Pancreas (tissue), 10 donors: ENCODE measurements at regions of chr7 and their contacts with region 1.

Region 1: DNA sequence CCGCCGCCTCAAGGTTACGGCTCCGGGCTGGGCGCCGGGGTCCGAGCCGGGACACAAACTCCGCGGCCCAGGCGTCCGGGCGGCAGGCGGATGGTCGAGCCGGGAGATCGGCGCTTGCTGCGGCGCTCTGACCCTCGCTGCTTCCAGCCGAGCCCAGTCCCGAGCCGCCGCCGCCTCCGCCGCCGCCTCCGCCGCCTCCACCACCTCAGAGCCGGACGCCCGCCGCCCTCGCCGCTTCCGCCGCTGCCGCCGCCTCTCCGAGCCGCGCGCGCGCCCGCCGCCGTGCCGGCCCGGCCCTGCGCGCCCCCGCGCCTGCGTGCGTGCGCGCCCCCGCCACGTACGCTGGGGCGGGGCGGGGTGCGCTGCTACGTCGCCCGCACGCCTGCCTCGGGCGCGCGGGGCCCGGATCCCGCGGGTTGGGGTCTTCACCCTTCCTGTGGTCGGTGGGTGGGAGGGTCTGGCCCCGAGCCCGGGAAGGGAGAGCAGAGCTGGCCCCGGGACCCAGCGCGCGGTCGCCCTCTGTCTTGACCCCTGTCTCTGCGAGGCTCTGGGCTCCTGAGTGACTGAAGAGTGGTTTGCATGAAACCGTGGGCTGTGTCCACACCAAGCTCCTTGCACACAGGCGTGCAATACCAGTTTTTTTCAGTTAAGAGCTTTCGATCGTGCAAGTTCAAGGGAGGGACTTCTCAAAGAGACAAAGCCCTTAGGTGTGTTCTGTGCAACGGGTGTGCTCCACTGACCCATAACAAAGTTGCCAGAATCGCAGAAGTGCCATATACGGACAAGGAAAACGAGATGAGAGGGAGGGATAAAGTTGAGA is at the start of gene SMURF1:
- DNase-seq: peak; percentile 53 to 89 (median 79)
- ATAC-seq: peak; percentile 68 to 81 (median 70)
- H3K4me3 ChIP-seq: peak within 1 kb of the TSS; percentile 84 to 98 (median 92)
- H3K27ac ChIP-seq: peak within 1 kb of the TSS; percentile 93 to 97 (median 94)
- H3K4me1 ChIP-seq: peaks cover 0 to 25% (median 17%) of the 10 kb centered on the region in 3 donors
- H3K27me3 ChIP-seq: no peaks in the 10 kb centered on the region
- CTCF ChIP-seq: no peak
- total RNA-seq, gene SMURF1: 9.0 to 22.7 (median 15.7) TPM

Region 2: DNA sequence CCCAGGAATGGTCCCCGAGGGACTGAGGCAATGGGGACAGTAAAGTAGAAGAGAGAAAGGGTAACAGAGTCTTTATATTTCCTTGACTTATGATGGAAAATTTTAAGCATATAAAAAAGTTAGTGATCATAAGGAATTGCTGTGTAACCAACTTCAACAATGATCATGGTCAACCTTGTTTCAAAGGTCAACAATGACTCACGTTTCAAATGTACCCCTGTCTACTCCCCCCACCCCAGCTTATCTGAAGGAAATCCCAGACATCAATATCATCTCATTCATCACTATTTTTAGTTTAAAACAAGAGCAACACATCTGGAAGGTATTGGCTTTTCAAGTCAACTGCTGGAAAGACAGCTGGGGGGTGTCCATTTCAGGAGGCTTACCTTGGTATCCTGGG is 93.1 kb before region 1 on chr7:
- intact Hi-C with region 1: loop called in 1 of 3 experiments (anchors 10 kb)
- DNase-seq: no peak
- ATAC-seq: peak; percentile 32 to 73 (median 50)
- H3K4me3 ChIP-seq: no peak overlapping the region
- H3K27ac ChIP-seq: no peak overlapping the region
- H3K4me1 ChIP-seq: peaks cover 0 to 6% (median 0%) of the 10 kb centered on the region in 3 donors
- H3K27me3 ChIP-seq: no peaks in the 10 kb centered on the region
- CTCF ChIP-seq: no peak

Region 3: DNA sequence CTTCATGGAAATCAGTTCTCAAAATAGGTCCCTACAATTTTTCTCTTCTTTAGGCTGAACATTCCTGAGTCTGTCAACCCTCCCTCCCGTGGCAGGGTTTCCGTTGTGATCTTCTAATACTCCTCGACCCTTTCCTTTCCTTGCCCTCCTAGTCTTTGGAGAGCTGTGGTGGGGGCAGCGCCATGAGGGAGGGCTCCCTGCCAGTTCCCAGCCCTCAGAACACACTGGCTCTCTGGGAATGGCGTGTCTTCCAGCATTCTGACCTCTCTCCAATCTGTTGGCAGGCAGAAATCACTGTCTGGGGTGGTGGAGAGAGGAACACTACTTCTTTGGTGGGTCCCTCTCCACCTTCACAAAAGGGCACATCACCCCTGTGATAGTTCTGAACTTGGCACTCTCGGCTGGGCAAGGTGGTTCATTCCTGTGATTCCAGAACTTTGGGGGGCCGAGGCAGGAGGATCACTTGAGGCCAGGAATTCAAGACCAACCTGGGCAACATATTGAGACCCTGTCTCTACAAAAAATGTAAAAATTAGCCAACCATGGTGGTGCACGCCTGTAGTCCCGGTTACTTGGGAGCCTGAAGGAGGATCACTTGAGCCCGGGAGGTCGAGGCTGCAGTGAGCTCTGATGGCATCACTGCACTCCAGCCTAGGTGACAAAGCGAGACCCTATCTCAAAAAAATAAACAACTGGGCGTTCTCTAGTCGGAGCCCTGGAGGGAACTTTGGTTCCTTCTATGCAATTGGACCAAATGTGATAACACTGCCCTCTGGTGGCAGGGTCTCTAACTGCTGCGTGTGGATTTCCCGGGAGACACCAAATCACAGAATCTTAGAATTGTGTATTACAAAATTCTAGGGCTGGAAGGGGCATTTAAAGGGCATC is 168.5 kb after region 1 on chr7:
- intact Hi-C with region 1: loop called in 1 of 3 experiments (anchors 10 kb)
- DNase-seq: peak in 5 of 6 donors; percentile 43 to 87 (median 68)
- ATAC-seq: peak; percentile 84 to 98 (median 90)
- H3K4me3 ChIP-seq: no peak overlapping the region
- H3K27ac ChIP-seq: no peak overlapping the region
- H3K4me1 ChIP-seq: peaks cover 0 to 4% (median 0%) of the 10 kb centered on the region in 3 donors
- H3K27me3 ChIP-seq: no peaks in the 10 kb centered on the region
- CTCF ChIP-seq: peak; percentile 89 to 92 (median 90)